A673 (cell line): ENCODE measurements at regions of chr14 and their contacts with region 1.

Region 1: DNA sequence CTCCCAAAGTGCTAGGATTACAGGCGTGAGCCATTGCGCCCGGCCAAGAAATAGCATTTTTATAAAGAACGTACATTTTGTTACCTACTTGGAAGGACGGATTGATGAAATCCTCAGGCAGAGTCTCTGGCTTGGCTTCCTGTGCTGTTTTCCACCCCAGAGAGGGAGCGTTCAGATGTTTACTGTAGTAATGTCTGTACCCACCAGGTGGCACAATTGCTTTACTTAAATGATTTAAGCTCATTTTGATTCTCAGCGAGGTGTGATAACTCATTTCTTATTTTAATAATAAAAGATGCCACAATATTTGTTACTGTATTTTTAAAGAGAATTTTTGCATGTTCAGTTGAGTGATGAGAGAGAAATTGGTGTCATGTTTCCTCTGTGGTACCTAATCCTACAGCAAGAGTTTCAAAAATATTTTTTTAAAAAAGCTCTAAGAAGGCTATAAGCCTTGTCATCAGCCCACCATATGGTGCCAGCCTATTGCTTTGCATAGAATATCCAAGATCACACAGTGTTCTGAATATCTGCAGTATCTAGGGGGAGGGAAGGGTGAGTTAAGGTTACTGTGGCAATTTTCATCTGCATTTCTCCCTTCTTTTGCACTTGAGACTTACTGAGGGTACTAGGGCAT is 82.6 kb upstream of the TRAF3 start:
- DNase-seq: peak; percentile 91
- H3K4me3 ChIP-seq: peak overlapping the region; percentile 25
- H3K27ac ChIP-seq: peak overlapping the region; percentile 82
- H3K4me1 ChIP-seq: peaks cover 71% of the 10 kb centered on the region
- H3K27me3 ChIP-seq: no peaks in the 10 kb centered on the region
- CTCF ChIP-seq: peak; percentile 77

Region 2: GRCh38 chr14:101917413-101918017 is 777.1 kb before region 1 on chr14:
- CTCF ChIA-PET with region 1: no interaction called
- POLR2A ChIA-PET with region 1: no interaction called
- intact Hi-C with region 1: no loop called
- DNase-seq: no peak
- H3K4me3 ChIP-seq: no peak overlapping the region
- H3K27ac ChIP-seq: no peak overlapping the region
- H3K4me1 ChIP-seq: no peaks in the 10 kb centered on the region
- H3K27me3 ChIP-seq: no peaks in the 10 kb centered on the region
- CTCF ChIP-seq: no peak

Region 3: DNA sequence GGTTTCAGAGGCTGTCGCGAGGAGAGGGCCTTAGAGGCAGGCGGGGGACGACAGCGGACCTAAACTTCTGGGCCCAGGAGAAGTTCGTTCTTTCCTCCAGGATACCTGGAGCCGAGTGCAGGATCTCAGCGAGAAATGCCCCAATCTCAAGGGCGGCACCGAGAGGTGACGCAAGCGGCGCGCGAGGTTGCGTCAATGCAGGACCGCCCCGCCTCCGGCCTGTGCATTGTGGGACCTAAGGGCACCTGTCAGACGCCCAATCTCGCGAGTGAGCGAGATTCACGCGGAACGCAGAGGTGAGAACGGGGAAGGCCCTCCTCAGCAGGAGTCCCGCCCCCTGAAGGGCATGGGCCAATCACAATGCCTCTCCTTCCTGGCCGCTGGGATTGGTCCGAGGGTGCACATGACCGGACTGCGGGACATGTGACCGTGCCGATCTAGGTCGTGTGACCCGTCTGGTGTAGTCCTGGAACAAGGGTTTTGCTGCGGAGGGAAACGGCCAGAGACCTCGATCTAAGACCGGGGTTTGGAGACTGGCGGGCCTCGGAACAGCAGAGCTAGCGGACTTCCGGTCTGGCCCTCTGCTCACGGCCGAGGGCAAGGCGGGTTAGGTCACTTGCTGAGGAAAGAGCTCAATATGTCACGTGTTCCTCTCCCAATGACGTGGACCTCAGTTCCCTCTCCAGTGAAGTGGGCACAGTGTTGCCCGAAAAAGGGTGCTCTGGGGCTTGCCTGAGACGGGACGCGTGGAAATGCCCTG is 746.6 kb before region 1 on chr14:
- CTCF ChIA-PET with region 1: no interaction called
- POLR2A ChIA-PET with region 1: no interaction called
- intact Hi-C with region 1: no loop called
- DNase-seq: peak; percentile 100
- H3K4me3 ChIP-seq: peak overlapping the region; percentile 81
- H3K27ac ChIP-seq: peak overlapping the region; percentile 98
- H3K4me1 ChIP-seq: no peaks in the 10 kb centered on the region
- H3K27me3 ChIP-seq: no peaks in the 10 kb centered on the region
- CTCF ChIP-seq: no peak

Region 4: DNA sequence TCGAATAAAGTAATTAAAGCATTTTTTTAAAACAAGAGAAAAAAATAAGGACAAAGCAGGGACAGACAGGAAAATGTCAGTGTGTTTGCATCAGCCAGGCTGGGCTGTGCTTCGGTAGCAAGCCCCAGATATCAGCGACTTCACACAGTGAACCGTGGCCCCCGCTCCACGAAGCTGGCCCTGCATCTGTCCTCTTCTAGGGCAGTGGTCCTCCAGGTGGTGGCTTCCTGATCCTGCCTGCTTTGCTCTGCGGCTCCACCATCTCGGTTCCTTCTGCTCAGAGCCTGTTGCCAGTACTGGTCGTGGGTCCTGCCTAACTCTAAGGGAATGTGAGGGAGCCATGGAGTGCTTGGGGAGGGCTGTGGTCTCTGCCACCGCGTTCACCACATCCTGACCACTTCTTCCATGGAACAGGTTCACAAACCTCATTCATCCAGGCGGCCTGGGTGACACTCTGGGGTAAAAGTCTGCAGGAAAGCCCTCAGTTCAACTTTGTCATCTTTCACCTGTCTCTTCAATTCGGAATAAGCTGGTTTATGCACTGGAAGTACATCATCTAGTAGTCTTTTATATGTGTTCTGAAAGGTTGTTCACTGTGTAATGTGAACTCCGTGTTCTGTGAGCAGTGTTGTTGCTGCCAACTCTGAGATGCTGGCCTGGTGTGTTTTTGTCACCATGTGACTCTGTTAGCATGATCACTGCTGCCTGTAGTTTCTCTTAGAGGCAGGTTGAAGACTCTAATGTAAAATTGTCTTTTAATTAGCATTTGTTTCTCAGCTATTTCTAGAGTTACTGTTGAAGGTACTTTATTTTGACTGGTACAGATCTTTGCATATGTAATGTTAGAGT is 232.9 kb before region 1 on chr14:
- CTCF ChIA-PET with region 1: no interaction called
- POLR2A ChIA-PET with region 1: no interaction called
- intact Hi-C with region 1: no loop called
- DNase-seq: no peak
- H3K4me3 ChIP-seq: no peak overlapping the region
- H3K27ac ChIP-seq: peak overlapping the region; percentile 13
- H3K4me1 ChIP-seq: peaks cover 9% of the 10 kb centered on the region
- H3K27me3 ChIP-seq: no peaks in the 10 kb centered on the region
- CTCF ChIP-seq: no peak

Region 5: DNA sequence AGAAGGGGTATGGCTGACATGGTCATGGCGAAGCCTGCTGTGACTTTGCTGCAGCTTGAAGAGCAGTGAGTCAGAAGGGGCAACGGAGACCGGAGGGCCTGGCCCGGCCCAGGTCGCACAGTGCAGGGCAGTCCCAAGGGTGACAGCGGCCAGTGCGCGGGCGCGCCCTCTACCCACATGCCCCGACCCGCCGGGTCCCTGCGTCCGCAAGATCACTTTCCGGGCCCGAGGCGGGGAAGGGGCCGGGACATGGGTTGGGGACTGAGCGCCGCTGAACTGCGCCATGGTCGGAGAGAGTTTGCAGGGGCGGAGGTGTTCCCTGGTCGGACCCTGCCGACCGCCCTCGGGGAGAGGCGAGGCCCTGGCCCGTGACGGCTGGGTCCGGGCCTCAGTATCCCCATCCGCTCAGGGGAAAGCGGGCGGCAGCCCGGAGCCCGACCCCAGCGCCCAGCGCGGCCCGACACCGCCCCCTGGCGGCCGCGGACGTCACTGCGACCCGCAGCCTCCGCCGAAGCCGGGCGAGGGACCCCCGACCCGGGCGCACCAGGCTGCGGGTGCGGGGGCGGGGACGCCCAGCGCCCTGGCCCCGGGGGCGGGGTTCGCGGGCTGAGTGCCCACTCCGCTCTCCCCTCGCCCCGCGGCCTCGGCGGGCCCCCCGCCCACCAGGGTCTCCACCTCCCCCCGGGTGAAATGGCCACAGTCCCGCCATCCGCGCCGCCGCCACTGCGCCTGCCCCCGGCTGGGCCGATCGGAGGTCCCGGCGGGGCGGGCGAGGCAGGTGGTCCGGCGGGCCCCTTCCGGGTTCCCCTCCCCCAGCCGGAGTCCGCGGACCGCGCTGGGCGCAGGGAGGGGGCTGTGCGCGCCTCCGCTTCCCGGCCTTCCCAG is 177.9 kb before region 1 on chr14:
- CTCF ChIA-PET with region 1: interaction called, 12 read pairs
- POLR2A ChIA-PET with region 1: no interaction called
- intact Hi-C with region 1: no loop called
- DNase-seq: peak; percentile 47
- H3K4me3 ChIP-seq: peak overlapping the region; percentile 67
- H3K27ac ChIP-seq: peak overlapping the region; percentile 80
- H3K4me1 ChIP-seq: peaks cover 5% of the 10 kb centered on the region
- H3K27me3 ChIP-seq: no peaks in the 10 kb centered on the region
- CTCF ChIP-seq: peak; percentile 56

Region 6: DNA sequence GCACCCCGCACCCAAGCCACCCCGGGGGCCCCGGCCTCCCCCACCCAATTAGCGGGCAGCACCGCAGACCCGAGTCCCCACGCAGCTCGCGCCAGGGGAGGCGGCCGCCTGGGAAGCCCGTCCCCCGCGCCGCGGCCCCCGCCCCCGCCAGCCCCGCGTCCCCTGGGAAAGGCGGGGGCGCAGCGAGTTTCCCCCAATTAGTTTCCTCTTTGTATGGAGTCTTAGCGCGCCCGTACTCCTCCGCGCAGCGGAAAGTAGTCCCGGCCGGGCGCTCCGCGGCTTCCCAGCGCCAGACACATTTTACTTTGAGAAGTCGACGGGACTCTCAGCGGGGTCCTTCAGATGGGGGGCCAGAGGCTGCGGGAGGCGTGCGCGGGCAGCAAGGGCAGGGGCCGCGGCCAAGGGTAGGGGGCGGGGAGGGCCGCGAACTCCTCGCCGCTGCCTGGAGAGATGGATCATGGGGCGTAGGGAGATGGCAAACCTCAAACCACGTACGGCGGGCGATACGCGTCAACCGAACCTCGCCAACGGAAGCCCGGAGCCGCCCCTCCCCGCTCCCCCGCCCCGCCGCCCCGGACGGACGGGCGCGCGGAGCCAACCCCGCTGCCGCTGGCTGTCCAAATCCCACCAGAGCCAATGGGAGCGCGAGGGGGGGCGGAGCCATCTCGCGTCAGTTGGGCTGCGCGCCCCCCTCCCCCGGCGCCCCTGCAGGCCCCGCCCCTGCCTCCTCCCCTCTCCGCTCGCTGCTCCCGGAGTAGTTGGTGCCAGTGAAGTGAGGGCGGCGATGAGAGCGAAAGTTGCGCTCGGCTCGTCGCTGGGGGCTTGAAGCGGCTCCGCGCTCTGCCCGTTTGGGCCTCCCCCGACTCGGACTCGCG is 102.5 kb before region 1 on chr14 and contains the start of gene RCOR1:
- CTCF ChIA-PET with region 1: interaction called, 5 read pairs
- POLR2A ChIA-PET with region 1: no interaction called
- intact Hi-C with region 1: loop called (anchors 5 kb)
- DNase-seq: peak; percentile 98
- H3K4me3 ChIP-seq: peak within 1 kb of the TSS; percentile 95
- H3K27ac ChIP-seq: peak within 1 kb of the TSS; percentile 99
- H3K4me1 ChIP-seq: peaks cover 11% of the 10 kb centered on the region
- H3K27me3 ChIP-seq: no peaks in the 10 kb centered on the region
- CTCF ChIP-seq: no peak
- total RNA-seq, gene RCOR1: 97.8 and 102 TPM in 2 replicates

Region 7: GRCh38 chr14:102917469-102918211 is 223.0 kb after region 1 on chr14:
- CTCF ChIA-PET with region 1: interaction called, 6 read pairs
- POLR2A ChIA-PET with region 1: no interaction called
- intact Hi-C with region 1: loop called (anchors 5 kb)
- DNase-seq: peak; percentile 78
- H3K4me3 ChIP-seq: no peak overlapping the region
- H3K27ac ChIP-seq: no peak overlapping the region
- H3K4me1 ChIP-seq: no peaks in the 10 kb centered on the region
- H3K27me3 ChIP-seq: peaks cover 2% of the 10 kb centered on the region
- CTCF ChIP-seq: peak; percentile 88

Region 8: DNA sequence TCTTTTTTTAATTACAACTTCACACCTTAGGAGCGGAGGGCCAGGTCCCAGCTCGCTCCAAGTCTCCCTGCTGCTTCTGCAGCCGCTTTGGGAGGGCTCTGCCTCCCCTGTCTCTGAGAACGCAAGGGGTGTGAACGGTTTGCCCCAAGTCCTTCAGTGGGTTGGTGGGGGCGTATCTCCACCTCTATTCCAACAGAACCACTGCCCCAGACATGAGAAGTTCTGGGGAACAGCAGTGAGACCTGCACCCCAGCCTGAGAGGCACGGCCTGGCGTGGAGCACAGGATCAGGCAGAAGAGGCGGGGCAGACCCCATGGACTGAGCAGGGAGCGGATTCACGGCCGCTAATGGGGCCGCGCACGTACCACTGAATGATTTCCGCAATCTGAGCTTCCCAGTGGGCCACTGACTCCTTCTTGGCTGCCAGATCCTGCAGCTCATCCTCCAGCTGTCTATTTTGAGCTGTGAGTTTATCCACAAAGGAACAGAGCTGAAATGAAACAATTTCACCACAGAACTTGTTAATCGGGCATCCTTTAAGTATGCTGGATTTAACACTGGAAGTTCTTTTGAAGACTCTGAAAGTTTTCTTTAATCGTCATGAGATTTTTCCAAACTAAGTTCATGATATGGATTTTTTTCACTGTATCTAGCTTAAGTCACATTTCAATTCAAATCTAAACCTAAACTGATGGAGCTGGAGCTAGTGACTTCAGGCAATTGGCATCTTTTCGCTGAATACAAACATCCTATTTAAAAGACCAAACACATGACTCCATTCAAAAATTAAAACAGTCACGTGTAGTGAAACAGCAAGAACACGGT is 272.2 kb after region 1 on chr14:
- CTCF ChIA-PET with region 1: no interaction called
- POLR2A ChIA-PET with region 1: no interaction called
- intact Hi-C with region 1: no loop called
- DNase-seq: no peak
- H3K4me3 ChIP-seq: no peak overlapping the region
- H3K27ac ChIP-seq: no peak overlapping the region
- H3K4me1 ChIP-seq: no peaks in the 10 kb centered on the region
- H3K27me3 ChIP-seq: no peaks in the 10 kb centered on the region
- CTCF ChIP-seq: no peak